CD4-positive, alpha-beta T cell (primary cell): ENCODE measurements at regions of chr1 and their contacts with region 1.

Region 1: GRCh38 chr1:8848663-8849386 is 29.7 kb downstream of the ENO1 start:
- DNase-seq: peak; percentile 60 to 86 (median 70)
- ATAC-seq: peak; percentile 94
- H3K4me3 ChIP-seq: no peak overlapping the region
- H3K4me3 Mint-ChIP-seq: no peak overlapping the region
- H3K27ac ChIP-seq: no peak overlapping the region
- H3K27ac Mint-ChIP-seq: no peak overlapping the region
- H3K4me1 ChIP-seq: peaks cover 7% of the 10 kb centered on the region
- H3K4me1 Mint-ChIP-seq: peaks cover 8% of the 10 kb centered on the region
- H3K27me3 ChIP-seq: no peaks in the 10 kb centered on the region
- H3K27me3 Mint-ChIP-seq: no peaks in the 10 kb centered on the region
- CTCF ChIP-seq: peak; percentile 91

Region 2: GRCh38 chr1:7808253-7808844 is 1040.5 kb before region 1 on chr1:
- CTCF ChIA-PET with region 1: no interaction called
- POLR2A ChIA-PET with region 1: no interaction called
- intact Hi-C with region 1: no loop called
- DNase-seq: peak in 3 of 14 experiments; percentile 35 to 43 (median 41)
- ATAC-seq: no peak
- H3K4me3 ChIP-seq: no peak overlapping the region
- H3K4me3 Mint-ChIP-seq: no peak overlapping the region
- H3K27ac ChIP-seq: no peak overlapping the region
- H3K27ac Mint-ChIP-seq: no peak overlapping the region
- H3K4me1 ChIP-seq: no peaks in the 10 kb centered on the region
- H3K4me1 Mint-ChIP-seq: no peaks in the 10 kb centered on the region
- H3K27me3 ChIP-seq: no peaks in the 10 kb centered on the region
- H3K27me3 Mint-ChIP-seq: no peaks in the 10 kb centered on the region
- CTCF ChIP-seq: peak; percentile 58

Region 3: GRCh38 chr1:8560611-8561544 is 287.9 kb before region 1 on chr1:
- CTCF ChIA-PET with region 1: interaction called, 31 read pairs
- POLR2A ChIA-PET with region 1: no interaction called
- intact Hi-C with region 1: loop called (anchors 1 kb)
- DNase-seq: peak in 7 of 14 experiments; percentile 9 to 77 (median 45)
- ATAC-seq: peak; percentile 94
- H3K4me3 ChIP-seq: no peak overlapping the region
- H3K4me3 Mint-ChIP-seq: no peak overlapping the region
- H3K27ac ChIP-seq: no peak overlapping the region
- H3K27ac Mint-ChIP-seq: no peak overlapping the region
- H3K4me1 ChIP-seq: no peaks in the 10 kb centered on the region
- H3K4me1 Mint-ChIP-seq: peaks cover 5% of the 10 kb centered on the region
- H3K27me3 ChIP-seq: no peaks in the 10 kb centered on the region
- H3K27me3 Mint-ChIP-seq: no peaks in the 10 kb centered on the region
- CTCF ChIP-seq: peak; percentile 95

Region 4: GRCh38 chr1:8727809-8728213 is 121.0 kb before region 1 on chr1:
- CTCF ChIA-PET with region 1: interaction called, 18 read pairs
- POLR2A ChIA-PET with region 1: no interaction called
- intact Hi-C with region 1: loop called in 1 of 2 experiments (anchors 5 kb)
- DNase-seq: no peak
- ATAC-seq: no peak
- H3K4me3 ChIP-seq: no peak overlapping the region
- H3K4me3 Mint-ChIP-seq: no peak overlapping the region
- H3K27ac ChIP-seq: no peak overlapping the region
- H3K27ac Mint-ChIP-seq: no peak overlapping the region
- H3K4me1 ChIP-seq: no peaks in the 10 kb centered on the region
- H3K4me1 Mint-ChIP-seq: peaks cover 19% of the 10 kb centered on the region
- H3K27me3 ChIP-seq: no peaks in the 10 kb centered on the region
- H3K27me3 Mint-ChIP-seq: no peaks in the 10 kb centered on the region
- CTCF ChIP-seq: no peak

Region 5: DNA sequence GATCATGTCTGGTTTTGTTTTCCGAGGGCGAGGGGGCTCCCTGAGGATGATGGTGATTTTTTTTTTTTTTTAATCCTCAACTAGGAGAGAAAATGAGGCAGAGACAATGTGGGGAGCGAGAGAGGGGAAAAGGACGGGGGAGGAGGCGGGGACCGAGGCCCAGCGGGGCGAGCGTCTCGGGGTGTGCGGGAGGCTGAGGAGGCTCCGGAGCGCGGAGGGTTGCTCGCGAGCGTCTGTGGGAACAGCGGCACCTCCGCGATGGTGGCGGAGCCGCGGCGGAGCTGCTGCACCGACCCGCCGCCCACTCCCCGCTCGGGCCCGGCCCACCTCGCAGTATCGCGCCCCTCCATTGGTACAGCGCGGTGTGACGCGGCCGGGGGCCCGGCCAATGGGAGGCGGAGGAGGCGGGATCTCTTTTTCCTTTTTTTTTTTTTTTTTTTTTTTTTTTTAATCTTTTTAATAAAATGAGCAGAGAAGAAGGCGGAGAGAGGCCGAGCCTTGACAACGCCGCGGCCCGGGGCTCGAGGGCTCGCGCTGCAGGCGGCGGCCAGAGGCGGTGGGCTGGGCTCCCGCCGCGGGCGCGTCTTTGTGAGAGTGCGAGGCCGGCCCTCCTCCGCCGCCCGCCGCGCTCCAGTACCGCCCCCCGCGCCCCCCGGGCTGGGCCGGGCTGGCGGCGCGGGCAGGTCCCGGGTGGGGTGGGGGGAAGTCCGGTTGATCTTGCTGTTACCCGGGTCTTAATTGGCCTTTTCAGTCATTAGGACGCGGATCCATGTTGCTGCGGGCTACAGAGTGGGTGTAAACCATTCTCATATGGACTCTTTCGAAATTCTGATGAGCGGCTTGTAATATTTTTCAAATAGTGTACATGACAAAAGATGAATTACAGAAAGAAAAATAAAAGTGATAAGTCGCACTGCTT is 31.2 kb before region 1 on chr1 and contains the start of gene RERE:
- CTCF ChIA-PET with region 1: interaction called, 10 read pairs
- POLR2A ChIA-PET with region 1: interaction called, 3 read pairs
- intact Hi-C with region 1: no loop called
- DNase-seq: peak; percentile 93 to 99 (median 96)
- ATAC-seq: peak; percentile 95
- H3K4me3 ChIP-seq: peak within 1 kb of the TSS; percentile 96
- H3K4me3 Mint-ChIP-seq: peak within 1 kb of the TSS; percentile 92
- H3K27ac ChIP-seq: peak within 1 kb of the TSS; percentile 80 to 83
- H3K27ac Mint-ChIP-seq: peak within 1 kb of the TSS; percentile 86
- H3K4me1 ChIP-seq: peaks cover 20% of the 10 kb centered on the region
- H3K4me1 Mint-ChIP-seq: peaks cover 44% of the 10 kb centered on the region
- H3K27me3 ChIP-seq: peaks cover 0 to 4% of the 10 kb centered on the region in 2 experiments
- H3K27me3 Mint-ChIP-seq: peaks cover 11% of the 10 kb centered on the region
- CTCF ChIP-seq: no peak
- total RNA-seq, gene RERE: 78.4 to 84.0 TPM

Region 6: DNA sequence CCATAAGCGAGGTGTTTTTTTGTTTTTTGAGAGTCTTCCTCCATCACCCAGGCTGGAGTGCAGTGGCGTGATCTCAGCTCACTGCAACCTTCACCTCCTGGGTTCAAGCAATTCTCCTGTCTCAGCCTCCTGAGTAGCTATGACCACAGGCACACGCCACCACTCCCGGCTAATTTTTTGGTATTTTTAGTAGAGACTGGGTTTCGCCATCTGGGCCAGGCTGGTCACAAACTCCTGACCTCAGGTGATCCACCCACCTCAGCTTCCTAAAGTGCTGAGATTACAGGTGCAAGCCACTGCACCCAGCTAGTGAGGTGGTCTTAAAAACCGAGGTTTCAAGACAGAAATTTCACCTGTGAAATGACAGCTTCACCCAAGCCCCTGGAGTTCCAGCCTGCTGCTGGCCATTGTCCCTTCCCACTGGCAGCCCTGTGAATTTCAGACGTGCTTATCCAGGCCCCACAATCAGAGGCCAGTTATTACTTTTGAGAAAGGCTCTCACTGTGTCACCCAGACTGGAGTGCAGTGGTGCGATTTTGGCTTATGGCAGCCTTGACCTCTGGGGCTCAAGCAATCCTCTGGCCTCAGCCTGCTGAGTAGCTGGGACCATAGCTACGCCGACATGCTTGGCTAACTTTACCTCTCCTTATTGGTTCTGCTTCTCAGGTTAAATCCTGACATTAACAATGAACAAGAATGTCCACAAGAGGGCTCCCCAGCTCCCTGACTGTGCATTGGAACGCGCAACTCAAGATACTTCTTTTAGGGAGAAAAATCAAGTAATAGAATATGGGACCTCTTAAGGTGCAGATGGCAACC is 10.3 kb after region 1 on chr1:
- CTCF ChIA-PET with region 1: interaction called, 26 read pairs
- POLR2A ChIA-PET with region 1: interaction called, 6 read pairs
- intact Hi-C with region 1: no loop called
- DNase-seq: peak in 13 of 14 experiments; percentile 26 to 79 (median 47)
- ATAC-seq: peak; percentile 82
- H3K4me3 ChIP-seq: no peak overlapping the region
- H3K4me3 Mint-ChIP-seq: no peak overlapping the region
- H3K27ac ChIP-seq: no peak overlapping the region
- H3K27ac Mint-ChIP-seq: peak overlapping the region; percentile 15
- H3K4me1 ChIP-seq: peaks cover 13% of the 10 kb centered on the region
- H3K4me1 Mint-ChIP-seq: peaks cover 20% of the 10 kb centered on the region
- H3K27me3 ChIP-seq: no peaks in the 10 kb centered on the region
- H3K27me3 Mint-ChIP-seq: no peaks in the 10 kb centered on the region
- CTCF ChIP-seq: peak; percentile 69